Activated CD8-positive, alpha-beta T cell treated with anti-CD3 and anti-CD28 coated beads for 36 hours (primary cell): ENCODE measurements at regions of chr2 and their contacts with region 1.

Region 1: DNA sequence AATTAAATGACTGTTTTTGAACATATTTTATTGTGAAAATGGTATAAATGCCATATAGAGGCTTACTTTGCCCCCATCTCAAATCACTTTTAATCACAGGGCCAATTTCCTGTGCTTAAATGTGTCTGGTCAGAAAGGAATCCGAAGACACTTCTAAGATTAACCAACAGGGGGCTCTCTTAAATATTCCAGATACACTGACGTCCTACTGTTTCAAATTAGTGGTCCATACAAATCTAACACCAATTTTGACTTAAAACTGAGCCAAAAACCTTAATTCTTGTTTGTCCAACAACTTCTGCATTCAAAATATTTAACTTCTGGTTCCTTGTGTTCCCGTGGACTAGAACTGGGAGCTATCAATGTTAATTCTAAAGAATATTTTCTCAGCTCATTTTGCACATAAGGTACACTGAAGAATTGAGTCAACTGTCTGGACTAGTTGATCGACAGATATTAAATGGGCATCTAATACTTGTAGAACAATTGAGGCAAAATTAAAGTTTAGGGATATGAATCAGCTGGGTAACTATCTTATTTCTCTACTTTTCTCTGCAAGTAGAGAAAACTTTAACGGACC is 557.5 kb downstream of the ARHGAP15 start:
- DNase-seq: no peak
- ATAC-seq: no peak
- H3K4me3 Mint-ChIP-seq: no peak overlapping the region
- H3K27ac Mint-ChIP-seq: no peak overlapping the region
- H3K4me1 Mint-ChIP-seq: peaks cover 34% of the 10 kb centered on the region
- H3K27me3 Mint-ChIP-seq: no peaks in the 10 kb centered on the region
- CTCF ChIP-seq: peak; percentile 66

Region 2: DNA sequence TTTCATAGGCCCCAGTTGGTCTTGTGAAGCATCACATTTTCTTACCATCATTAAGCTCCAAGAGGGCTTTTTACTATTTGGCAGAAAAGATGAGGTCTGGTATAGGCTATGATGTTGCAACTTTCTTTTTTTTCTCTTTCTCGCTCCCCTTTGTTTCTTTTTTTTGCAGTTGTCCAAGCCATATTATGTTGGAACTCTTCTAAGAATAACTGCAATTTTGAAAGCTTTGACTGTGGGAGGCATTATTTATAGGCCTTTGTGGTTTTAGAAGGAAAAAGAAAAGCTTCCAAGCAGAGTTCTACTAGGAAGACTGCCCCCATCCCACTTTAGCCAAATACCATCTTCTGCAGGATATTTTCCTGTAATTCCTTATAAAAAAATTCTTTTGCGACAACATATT is 14.2 kb after region 1 on chr2:
- CTCF ChIA-PET with region 1: interaction called, 14 read pairs
- POLR2A ChIA-PET with region 1: interaction called, 3 read pairs
- intact Hi-C with region 1: no loop called
- DNase-seq: no peak
- ATAC-seq: no peak
- H3K4me3 Mint-ChIP-seq: no peak overlapping the region
- H3K27ac Mint-ChIP-seq: peak overlapping the region; percentile 72
- H3K4me1 Mint-ChIP-seq: peaks cover 69% of the 10 kb centered on the region
- H3K27me3 Mint-ChIP-seq: no peaks in the 10 kb centered on the region
- CTCF ChIP-seq: no peak